Gastrocnemius medialis (tissue), 4 donors: ENCODE measurements at regions of chr4 and their contacts with region 1.

Region 1: DNA sequence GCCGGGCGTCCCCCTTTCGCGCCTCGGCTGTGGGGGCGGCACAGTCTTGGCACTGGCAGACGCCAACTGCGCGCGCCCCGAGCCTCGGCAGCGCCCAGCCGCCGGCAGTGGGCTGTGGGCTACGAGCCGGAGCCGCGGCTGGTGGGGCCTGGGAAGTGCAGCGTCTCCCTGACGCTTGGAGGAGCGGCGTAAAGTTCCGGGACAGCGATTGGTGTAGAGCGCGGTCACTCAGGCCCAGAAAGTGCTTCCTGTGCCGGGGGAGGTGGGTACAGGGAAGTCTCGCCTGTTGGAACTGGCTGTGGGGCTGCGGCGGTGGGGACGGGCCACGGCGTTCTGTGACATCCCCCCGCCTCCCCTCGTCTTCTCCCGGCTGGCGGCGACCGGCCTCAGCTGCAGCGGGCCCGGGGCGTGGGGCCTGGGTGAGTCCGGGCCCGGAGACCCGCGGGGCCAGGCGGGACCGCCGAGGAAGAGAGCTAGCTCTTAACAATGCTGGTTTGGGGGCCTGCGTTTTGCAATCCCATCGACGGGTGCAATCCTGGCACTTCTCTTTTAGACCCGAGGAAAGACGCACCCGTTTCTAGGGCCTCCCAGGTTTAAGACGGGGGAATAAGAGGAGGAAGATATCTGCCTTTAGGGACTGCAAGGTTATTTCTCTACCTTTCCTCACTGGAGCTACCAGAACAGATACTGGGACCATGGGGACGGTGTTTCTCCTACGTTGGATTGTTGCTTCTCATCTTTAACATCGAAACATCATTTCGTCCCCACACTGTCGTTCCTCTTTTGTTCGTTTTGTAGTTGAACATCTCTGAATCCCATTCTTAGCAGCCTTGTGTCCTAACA is at the starts of genes RWDD4 and TRAPPC11:
- DNase-seq: peak; percentile 97 to 98
- ATAC-seq: peak; percentile 99 to 100
- H3K4me3 ChIP-seq: peak within 1 kb of the TSS; percentile 72 to 99 (median 76)
- H3K27ac ChIP-seq: peak within 1 kb of the TSS; percentile 82 to 96 (median 94)
- H3K4me1 ChIP-seq: peaks cover 21 to 32% of the 10 kb centered on the region in 2 donors
- H3K27me3 ChIP-seq: no peaks in the 10 kb centered on the region
- CTCF ChIP-seq: peak in 4 of 5 experiments; percentile 32 to 57 (median 42)
- POLR2A ChIP-seq: peak; percentile 95
- total RNA-seq, gene RWDD4: 34.6 to 65.2 (median 51.9) TPM
- total RNA-seq, gene TRAPPC11: 19.3 to 31.7 (median 20.8) TPM

Region 2: DNA sequence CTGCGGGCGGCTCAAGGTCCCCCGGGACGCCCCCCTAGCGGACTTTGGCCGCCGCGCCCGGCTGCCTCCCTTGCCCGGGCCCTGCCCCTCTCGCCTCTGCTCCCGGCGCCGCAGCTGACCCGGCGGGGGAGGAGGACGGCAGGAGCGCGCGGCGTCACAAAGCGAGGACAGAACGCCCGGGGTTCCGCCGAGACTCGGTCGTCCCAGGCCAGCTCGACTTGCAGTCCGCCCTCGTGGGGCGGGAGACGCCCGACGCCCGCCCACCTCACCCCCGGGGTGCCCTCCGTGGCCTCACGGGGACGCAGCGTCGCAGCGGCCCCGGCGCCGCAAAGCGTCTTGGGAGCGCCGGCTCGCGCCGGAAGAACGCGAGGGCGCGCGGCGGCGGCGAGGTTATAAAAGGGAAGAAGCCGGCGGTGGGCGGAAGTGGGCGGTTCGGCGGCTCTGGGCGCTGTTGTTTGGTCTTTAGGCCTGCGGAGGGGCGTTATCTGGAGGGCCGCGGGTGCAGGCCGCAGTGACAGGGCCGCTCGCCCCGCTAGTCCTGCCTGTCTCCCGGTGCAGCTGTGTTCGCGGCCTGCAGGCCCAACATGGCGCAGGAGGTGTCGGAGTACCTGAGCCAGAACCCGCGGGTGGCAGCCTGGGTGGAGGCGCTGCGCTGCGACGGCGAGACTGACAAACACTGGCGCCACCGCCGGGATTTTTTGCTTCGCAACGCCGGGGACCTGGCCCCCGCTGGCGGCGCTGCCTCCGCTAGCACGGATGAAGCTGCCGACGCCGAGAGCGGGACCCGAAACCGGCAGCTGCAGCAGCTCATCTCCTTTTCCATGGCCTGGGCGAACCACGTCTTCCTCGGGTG is 214.8 kb before region 1 on chr4 and contains the start of gene CDKN2AIP:
- in situ Hi-C with region 1: no loop called
- intact Hi-C with region 1: loop called (anchors 2 kb)
- DNase-seq: peak; percentile 85 to 89
- ATAC-seq: peak; percentile 89 to 92
- H3K4me3 ChIP-seq: peak within 1 kb of the TSS; percentile 63 to 98 (median 98)
- H3K27ac ChIP-seq: peak within 1 kb of the TSS; percentile 96 to 98 (median 97)
- H3K4me1 ChIP-seq: peaks cover 50 to 54% of the 10 kb centered on the region in 2 donors
- H3K27me3 ChIP-seq: no peaks in the 10 kb centered on the region
- CTCF ChIP-seq: peak in 2 of 5 experiments; percentile 25 to 30
- POLR2A ChIP-seq: peak; percentile 98 to 99
- total RNA-seq, gene CDKN2AIP: 9.2 to 17.3 (median 12.2) TPM

Region 3: GRCh38 chr4:183563874-183564273 is 95.4 kb before region 1 on chr4:
- in situ Hi-C with region 1: no loop called
- intact Hi-C with region 1: no loop called
- DNase-seq: no peak
- ATAC-seq: no peak
- H3K4me3 ChIP-seq: no peak overlapping the region
- H3K27ac ChIP-seq: no peak overlapping the region
- H3K4me1 ChIP-seq: no peaks in the 10 kb centered on the region
- H3K27me3 ChIP-seq: no peaks in the 10 kb centered on the region
- CTCF ChIP-seq: no peak
- POLR2A ChIP-seq: no peak

Region 4: DNA sequence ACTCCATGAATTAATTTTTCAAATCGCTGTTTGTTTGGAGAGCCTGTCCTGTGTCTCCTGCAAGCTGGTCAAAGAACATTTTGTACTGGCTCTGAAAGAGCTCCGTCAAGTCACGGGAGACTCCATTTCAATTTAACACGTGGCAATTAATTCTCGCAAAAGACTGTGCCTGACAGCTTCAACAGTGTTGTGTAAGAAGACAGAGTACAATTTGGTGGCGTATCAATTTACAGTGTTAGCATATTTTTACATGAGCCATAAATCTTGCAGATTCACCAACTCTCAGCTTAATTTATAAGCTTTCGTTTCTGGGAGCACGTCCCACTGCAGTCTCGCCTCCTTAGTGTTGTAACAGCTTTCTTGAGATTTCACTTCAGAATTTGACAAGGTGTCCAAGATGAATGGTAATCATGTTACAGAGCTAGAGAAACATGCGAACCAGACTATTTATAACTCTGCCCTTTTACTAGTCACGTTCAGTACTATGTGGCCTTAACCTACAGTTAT is 71.0 kb before region 1 on chr4:
- in situ Hi-C with region 1: no loop called
- intact Hi-C with region 1: loop called (anchors 2 kb)
- DNase-seq: peak; percentile 74 to 87
- ATAC-seq: peak; percentile 96
- H3K4me3 ChIP-seq: no peak overlapping the region
- H3K27ac ChIP-seq: peak overlapping the region; percentile 85 to 95 (median 90)
- H3K4me1 ChIP-seq: peaks cover 22 to 23% of the 10 kb centered on the region in 2 donors
- H3K27me3 ChIP-seq: no peaks in the 10 kb centered on the region
- CTCF ChIP-seq: no peak
- POLR2A ChIP-seq: peak in 1 of 2 donors; percentile 48